ENCODE measurements at regions of chr2 and their contacts with region 1.

Region 1: DNA sequence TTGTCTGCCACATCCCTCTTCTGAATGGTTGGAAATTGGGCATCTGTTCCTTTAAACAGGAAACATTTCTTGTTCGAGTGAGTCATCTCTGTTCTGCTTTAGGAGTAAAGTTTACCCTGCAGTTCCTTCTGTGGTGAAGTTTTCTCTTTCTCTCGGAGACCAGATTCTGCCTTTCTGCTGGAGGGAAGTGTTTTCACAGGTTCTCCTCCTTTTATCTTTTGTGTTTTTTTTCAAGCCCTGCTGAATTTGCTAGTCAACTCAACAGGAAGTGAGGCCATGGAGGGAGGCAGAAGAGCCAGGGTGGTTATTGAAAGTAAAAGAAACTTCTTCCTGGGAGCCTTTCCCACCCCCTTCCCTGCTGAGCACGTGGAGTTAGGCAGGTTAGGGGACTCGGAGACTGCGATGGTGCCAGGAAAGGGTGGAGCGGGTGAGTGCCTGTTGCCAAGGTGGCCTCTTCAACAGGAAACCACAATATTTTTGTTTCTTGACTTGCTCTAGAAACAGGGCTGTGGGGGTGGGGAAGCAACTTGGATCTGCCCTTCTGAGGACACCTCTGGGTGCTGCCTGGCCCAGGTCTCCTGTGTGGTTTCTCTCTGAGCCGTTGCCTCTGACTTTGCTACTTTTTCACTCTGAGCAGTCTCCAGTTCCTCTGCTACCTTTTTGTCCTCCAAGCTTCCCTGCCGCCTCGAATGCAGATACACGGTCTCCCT is 2.2 kb upstream of the CASP8 start:
- DNase-seq: peak; percentile 95 to 99 (median 98)
- H3K4me3 ChIP-seq: peak overlapping the region; percentile 57 to 58
- H3K4me3 Mint-ChIP-seq: peak overlapping the region; percentile 89 to 93 (median 92)
- H3K27ac ChIP-seq: peak overlapping the region; percentile 86
- H3K27ac Mint-ChIP-seq: peak overlapping the region; percentile 95 to 100 (median 99)
- H3K4me1 ChIP-seq: peaks cover 79% of the 10 kb centered on the region
- H3K4me1 Mint-ChIP-seq: peaks cover 40 to 81% (median 61%) of the 10 kb centered on the region in 4 donors
- H3K27me3 ChIP-seq: no peaks in the 10 kb centered on the region
- H3K27me3 Mint-ChIP-seq: no peaks in the 10 kb centered on the region

Region 2: DNA sequence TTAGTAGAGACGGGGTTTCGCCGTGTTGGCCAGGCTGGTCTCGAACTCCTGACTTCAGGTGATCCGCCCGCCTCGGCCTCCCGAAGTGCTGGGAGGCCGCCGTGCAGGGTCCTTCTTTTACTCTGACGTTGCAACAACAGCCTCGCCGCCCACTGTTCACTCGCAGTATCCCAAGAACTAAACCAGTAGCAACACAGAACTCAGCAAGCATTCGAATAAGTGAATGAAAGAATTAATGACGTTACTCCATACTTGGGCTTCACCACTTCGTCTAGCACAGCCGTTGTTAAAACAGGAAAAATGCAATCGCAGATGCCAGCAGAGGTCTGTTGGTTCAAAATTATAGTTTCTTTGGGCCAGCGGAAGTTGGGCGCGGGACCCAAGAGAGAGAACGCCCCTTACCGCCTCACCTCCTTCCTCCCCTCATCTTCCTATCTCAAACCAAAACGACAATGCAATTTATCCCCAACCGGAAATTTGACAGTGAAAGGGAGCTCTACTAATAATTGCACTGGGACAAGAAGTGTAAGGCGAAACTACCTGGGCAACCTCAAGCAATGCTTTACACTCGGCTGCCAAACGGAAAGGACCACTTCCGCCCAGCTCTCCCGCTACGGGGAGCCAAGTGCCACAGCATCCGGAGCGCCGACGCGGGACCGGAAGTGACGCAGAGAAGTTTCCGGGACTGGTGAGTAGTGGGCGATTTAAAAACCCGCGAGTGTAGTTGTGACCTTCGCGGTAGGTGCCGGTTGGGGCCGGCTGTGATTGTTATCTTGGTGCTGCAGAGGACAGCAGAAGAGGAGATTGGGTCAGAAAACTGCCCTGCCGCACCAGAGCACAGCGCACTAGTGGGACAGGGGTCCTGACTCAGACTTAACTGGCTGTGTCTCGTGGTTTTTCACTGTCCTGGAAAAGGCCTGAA is 369.1 kb before region 1 on chr2 and contains the starts of genes NIF3L1 and PPIL3:
- CTCF ChIA-PET with region 1: no interaction called
- POLR2A ChIA-PET with region 1: interaction called, 10 read pairs
- intact Hi-C with region 1: no loop called
- DNase-seq: peak; percentile 96 to 98 (median 96)
- H3K4me3 ChIP-seq: peak within 1 kb of the TSS; percentile 91 to 92
- H3K4me3 Mint-ChIP-seq: peak within 1 kb of the TSS; percentile 90 to 98 (median 96)
- H3K27ac ChIP-seq: peak within 1 kb of the TSS; percentile 85
- H3K27ac Mint-ChIP-seq: peak within 1 kb of the TSS; percentile 98 to 100 (median 99)
- H3K4me1 ChIP-seq: peaks cover 31% of the 10 kb centered on the region
- H3K4me1 Mint-ChIP-seq: peaks cover 30 to 57% (median 45%) of the 10 kb centered on the region in 4 donors
- H3K27me3 ChIP-seq: no peaks in the 10 kb centered on the region
- H3K27me3 Mint-ChIP-seq: no peaks in the 10 kb centered on the region
- total RNA-seq, gene NIF3L1: 30.0 to 30.3 TPM
- total RNA-seq, gene PPIL3: 48.0 to 57.7 TPM

Region 3: GRCh38 chr2:201237486-201238123 is 20.5 kb before region 1 on chr2:
- CTCF ChIA-PET with region 1: interaction called, 108 read pairs
- POLR2A ChIA-PET with region 1: interaction called, 249 read pairs
- intact Hi-C with region 1: loop called (anchors 1 kb)
- DNase-seq: no peak
- H3K4me3 ChIP-seq: no peak overlapping the region
- H3K4me3 Mint-ChIP-seq: peak overlapping the region in 7 of 8 donors; percentile 0 to 96 (median 16)
- H3K27ac ChIP-seq: peak overlapping the region; percentile 13
- H3K27ac Mint-ChIP-seq: peak overlapping the region; percentile 64 to 91 (median 84)
- H3K4me1 ChIP-seq: peaks cover 53% of the 10 kb centered on the region
- H3K4me1 Mint-ChIP-seq: peaks cover 44 to 72% (median 54%) of the 10 kb centered on the region in 4 donors
- H3K27me3 ChIP-seq: no peaks in the 10 kb centered on the region
- H3K27me3 Mint-ChIP-seq: no peaks in the 10 kb centered on the region

Region 4: DNA sequence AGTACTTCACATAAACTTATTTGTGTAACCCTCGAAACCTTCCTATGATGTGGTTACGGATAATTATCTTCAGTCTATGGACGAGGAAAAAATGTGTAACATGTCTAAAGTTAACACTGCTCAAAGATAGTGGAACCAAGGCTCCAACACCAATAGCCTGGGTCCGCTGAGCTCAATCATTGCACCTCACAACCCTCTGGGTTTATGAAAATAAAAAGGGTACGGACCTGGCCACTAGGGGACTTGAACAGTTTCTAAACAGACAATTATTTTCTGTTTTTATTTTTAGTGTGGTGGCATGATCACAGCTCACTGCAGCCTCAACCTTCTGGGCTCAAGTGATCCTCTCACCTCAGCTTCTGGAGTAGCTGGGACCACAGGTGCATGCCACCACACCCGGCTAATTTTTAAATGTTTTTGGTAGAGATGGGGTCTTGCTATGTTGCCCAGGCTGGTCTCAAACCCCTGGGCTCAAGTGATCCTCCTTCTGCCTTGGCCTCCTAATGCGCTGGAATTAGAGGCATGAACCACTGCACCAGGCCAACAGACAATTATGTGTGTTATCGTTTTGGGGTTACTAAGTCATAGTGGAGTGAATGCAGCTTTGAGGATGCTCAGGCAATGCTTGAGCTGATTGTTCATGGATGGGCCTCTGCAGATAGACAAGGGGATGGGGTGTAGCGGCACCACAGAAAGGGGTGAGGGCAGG is 12.3 kb after region 1 on chr2:
- CTCF ChIA-PET with region 1: interaction called, 18 read pairs
- POLR2A ChIA-PET with region 1: interaction called, 76 read pairs
- intact Hi-C with region 1: loop called (anchors 1 kb)
- DNase-seq: no peak
- H3K4me3 ChIP-seq: no peak overlapping the region
- H3K4me3 Mint-ChIP-seq: peak overlapping the region in 6 of 8 donors; percentile 26 to 70 (median 44)
- H3K27ac ChIP-seq: no peak overlapping the region
- H3K27ac Mint-ChIP-seq: peak overlapping the region; percentile 58 to 88 (median 80)
- H3K4me1 ChIP-seq: peaks cover 83% of the 10 kb centered on the region
- H3K4me1 Mint-ChIP-seq: peaks cover 63 to 88% (median 75%) of the 10 kb centered on the region in 4 donors
- H3K27me3 ChIP-seq: no peaks in the 10 kb centered on the region
- H3K27me3 Mint-ChIP-seq: no peaks in the 10 kb centered on the region

Region 5: DNA sequence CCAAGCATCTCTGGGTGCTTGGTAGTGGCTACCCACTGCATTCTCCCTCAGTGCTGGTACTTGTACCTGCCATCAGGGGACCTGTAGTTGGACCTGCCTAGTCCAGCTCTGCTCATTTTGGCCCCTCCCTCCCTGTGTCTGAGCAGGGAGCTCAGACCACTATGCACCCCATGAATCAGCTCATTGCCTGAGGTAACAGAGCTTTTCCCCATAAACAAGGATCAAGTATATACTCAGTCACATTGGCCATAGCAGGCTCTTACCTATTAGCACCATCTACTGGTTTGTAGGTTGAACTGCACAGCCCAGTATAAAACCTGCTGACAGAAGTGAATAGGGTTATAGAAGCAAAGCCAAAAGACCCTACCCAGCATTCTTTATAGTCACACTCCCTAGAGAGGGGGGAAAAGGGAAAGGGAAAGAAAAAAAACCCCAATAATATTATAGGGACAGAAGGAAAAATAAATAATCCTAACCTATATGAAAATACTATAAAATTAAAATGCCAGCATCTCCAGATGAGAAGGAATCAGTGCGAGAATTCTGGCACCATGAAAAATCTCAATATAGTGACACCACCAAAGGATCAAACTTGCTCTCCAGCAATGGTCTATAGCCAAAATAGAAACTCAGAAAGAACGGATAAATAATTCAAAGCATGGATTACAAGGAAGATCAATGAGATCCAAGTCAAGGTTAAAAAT is 105.9 kb after region 1 on chr2:
- CTCF ChIA-PET with region 1: interaction called, 17 read pairs
- POLR2A ChIA-PET with region 1: interaction called, 27 read pairs
- intact Hi-C with region 1: loop called (anchors 1 kb)
- DNase-seq: peak in 4 of 5 donors; percentile 49 to 59 (median 58)
- H3K4me3 ChIP-seq: no peak overlapping the region
- H3K4me3 Mint-ChIP-seq: peak overlapping the region in 3 of 8 donors; percentile 24 to 51 (median 32)
- H3K27ac ChIP-seq: no peak overlapping the region
- H3K27ac Mint-ChIP-seq: peak overlapping the region in 4 of 7 donors; percentile 38 to 84 (median 70)
- H3K4me1 ChIP-seq: peaks cover 31% of the 10 kb centered on the region
- H3K4me1 Mint-ChIP-seq: peaks cover 20 to 33% (median 27%) of the 10 kb centered on the region in 4 donors
- H3K27me3 ChIP-seq: no peaks in the 10 kb centered on the region
- H3K27me3 Mint-ChIP-seq: no peaks in the 10 kb centered on the region

Region 6: DNA sequence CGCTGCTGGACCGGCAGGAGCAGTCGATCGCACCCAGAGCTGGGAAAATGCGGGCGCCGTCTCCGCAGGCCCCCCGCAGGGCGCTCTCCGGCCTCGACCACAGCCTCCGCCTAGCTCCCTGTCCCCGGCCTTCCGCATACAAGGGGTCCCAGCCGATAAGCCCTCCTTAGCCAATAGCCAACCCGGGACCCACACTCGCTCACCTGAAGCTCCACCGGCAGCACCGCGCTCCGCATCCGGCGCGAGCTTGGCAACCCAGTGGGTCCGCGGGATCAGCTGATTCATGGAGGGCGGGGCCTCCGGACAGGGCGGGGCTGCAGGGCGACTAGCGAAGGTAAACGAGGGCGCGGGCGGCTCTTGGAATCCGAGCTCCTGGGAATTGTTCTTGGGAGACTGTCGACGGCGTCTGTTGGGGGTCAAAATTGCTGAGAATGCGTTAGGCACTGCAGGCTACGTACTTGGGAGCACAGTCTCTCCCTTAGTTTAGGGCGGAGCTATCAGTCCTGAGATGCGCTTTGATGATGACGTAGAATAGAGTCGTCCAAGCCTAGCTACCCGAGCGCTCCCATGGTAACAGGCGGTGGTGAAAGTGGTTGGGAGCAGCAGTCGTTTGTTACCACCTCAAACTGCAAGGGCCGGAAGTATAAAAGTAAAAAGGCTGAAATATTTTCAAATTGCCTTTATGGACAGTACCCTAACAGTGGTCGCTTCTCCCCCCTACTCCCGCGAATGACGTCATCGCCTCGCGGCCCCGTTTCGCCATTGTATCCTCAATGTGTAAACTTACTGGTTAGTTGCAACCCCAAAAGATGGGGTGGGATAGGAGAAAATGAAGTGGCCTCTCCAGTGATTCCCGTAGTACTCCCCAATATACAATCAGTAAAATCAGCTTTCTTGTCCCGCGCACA is 522.8 kb after region 1 on chr2 and contains the start of gene ALS2:
- CTCF ChIA-PET with region 1: interaction called, 4 read pairs
- POLR2A ChIA-PET with region 1: interaction called, 9 read pairs
- intact Hi-C with region 1: loop called (anchors 1 kb)
- DNase-seq: peak; percentile 94 to 97 (median 96)
- H3K4me3 ChIP-seq: peak within 1 kb of the TSS; percentile 89 to 95
- H3K4me3 Mint-ChIP-seq: peak within 1 kb of the TSS; percentile 93 to 99 (median 97)
- H3K27ac ChIP-seq: peak within 1 kb of the TSS; percentile 76
- H3K27ac Mint-ChIP-seq: peak within 1 kb of the TSS; percentile 85 to 100 (median 99)
- H3K4me1 ChIP-seq: peaks cover 15% of the 10 kb centered on the region
- H3K4me1 Mint-ChIP-seq: peaks cover 11 to 22% (median 15%) of the 10 kb centered on the region in 4 donors
- H3K27me3 ChIP-seq: no peaks in the 10 kb centered on the region
- H3K27me3 Mint-ChIP-seq: peaks cover 1 to 4% of the 10 kb centered on the region in 2 donors
- total RNA-seq, gene ALS2: 9.8 to 10.5 TPM